ENCODE measurements at regions of chr10 and their contacts with region 1.

Region 1: GRCh38 chr10:89251409-89252224 is at the start of gene LIPA:
- DNase-seq: peak; percentile 88 to 99 (median 96)
- ATAC-seq: peak; percentile 94
- H3K4me3 Mint-ChIP-seq: peak within 1 kb of the TSS; percentile 83 to 93 (median 88)
- H3K27ac Mint-ChIP-seq: peak within 1 kb of the TSS; percentile 65 to 93 (median 88)
- H3K4me1 Mint-ChIP-seq: peaks cover 11 to 31% (median 21%) of the 10 kb centered on the region in 4 donors
- H3K27me3 Mint-ChIP-seq: peaks cover 0 to 7% (median 0%) of the 10 kb centered on the region in 5 donors
- polyA plus RNA-seq, gene LIPA: 86.7 to 102 (median 88.6) TPM

Region 2: DNA sequence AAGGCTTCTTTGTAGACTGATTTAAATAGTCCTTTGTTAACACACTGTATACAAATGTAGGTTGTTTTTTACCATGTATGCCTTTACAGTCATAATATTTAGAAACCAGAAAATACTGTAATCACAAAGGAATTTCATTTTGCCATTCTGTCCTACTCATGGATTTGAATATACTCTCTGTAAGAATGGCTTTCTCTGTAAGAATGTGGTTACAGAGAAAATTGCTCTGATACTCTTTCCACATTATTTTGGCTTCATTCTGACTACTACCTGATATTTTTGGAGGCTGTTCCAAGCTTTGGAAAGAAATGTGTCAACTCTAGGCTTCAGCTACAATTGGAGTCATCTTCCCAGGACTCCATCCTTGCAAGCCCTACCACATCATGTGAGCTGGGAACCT is 68.0 kb before region 1 on chr10:
- POLR2A ChIA-PET with region 1: no interaction called
- DNase-seq: no peak
- ATAC-seq: no peak
- H3K4me3 Mint-ChIP-seq: no peak overlapping the region
- H3K27ac Mint-ChIP-seq: no peak overlapping the region
- H3K4me1 Mint-ChIP-seq: peaks cover 0 to 6% (median 0%) of the 10 kb centered on the region in 4 donors
- H3K27me3 Mint-ChIP-seq: peaks cover 0 to 7% (median 0%) of the 10 kb centered on the region in 5 donors

Region 3: GRCh38 chr10:89301721-89302445 is 50.3 kb after region 1 on chr10 and contains the start of gene IFIT2:
- POLR2A ChIA-PET with region 1: interaction called, 12 read pairs
- DNase-seq: peak in 7 of 10 donors; percentile 10 to 68 (median 25)
- ATAC-seq: peak; percentile 76 to 81
- H3K4me3 Mint-ChIP-seq: peak within 1 kb of the TSS; percentile 88 to 97 (median 94)
- H3K27ac Mint-ChIP-seq: peak within 1 kb of the TSS; percentile 90 to 99 (median 97)
- H3K4me1 Mint-ChIP-seq: peaks cover 19 to 56% (median 33%) of the 10 kb centered on the region in 4 donors
- H3K27me3 Mint-ChIP-seq: no peaks in the 10 kb centered on the region
- polyA plus RNA-seq, gene IFIT2: 3.7 to 7.0 (median 5.7) TPM

Region 4: GRCh38 chr10:89391917-89392756 is 140.5 kb after region 1 on chr10 and contains the start of gene IFIT1:
- POLR2A ChIA-PET with region 1: interaction called, 19 read pairs
- DNase-seq: peak; percentile 12 to 81 (median 46)
- ATAC-seq: peak; percentile 95
- H3K4me3 Mint-ChIP-seq: peak within 1 kb of the TSS; percentile 86 to 95 (median 88)
- H3K27ac Mint-ChIP-seq: peak within 1 kb of the TSS; percentile 87 to 99 (median 91)
- H3K4me1 Mint-ChIP-seq: peaks cover 12 to 50% (median 30%) of the 10 kb centered on the region in 4 donors
- H3K27me3 Mint-ChIP-seq: no peaks in the 10 kb centered on the region
- polyA plus RNA-seq, gene IFIT1: 1.0 to 6.9 (median 2.9) TPM

Region 5: GRCh38 chr10:89414146-89414878 is 162.7 kb after region 1 on chr10 and contains the start of gene IFIT5:
- POLR2A ChIA-PET with region 1: interaction called, 28 read pairs
- DNase-seq: peak; percentile 53 to 81 (median 68)
- ATAC-seq: peak; percentile 81 to 85
- H3K4me3 Mint-ChIP-seq: peak within 1 kb of the TSS; percentile 92 to 100 (median 97)
- H3K27ac Mint-ChIP-seq: peak within 1 kb of the TSS; percentile 91 to 100 (median 98)
- H3K4me1 Mint-ChIP-seq: peaks cover 26 to 78% (median 52%) of the 10 kb centered on the region in 4 donors
- H3K27me3 Mint-ChIP-seq: no peaks in the 10 kb centered on the region
- polyA plus RNA-seq, gene IFIT5: 9.0 to 10.6 (median 10.3) TPM